Activated CD4-positive, alpha-beta T cell treated with anti-CD3 and anti-CD28 coated beads for 36 hours (primary cell): ENCODE measurements at regions of chr6 and their contacts with region 1.

Region 1: DNA sequence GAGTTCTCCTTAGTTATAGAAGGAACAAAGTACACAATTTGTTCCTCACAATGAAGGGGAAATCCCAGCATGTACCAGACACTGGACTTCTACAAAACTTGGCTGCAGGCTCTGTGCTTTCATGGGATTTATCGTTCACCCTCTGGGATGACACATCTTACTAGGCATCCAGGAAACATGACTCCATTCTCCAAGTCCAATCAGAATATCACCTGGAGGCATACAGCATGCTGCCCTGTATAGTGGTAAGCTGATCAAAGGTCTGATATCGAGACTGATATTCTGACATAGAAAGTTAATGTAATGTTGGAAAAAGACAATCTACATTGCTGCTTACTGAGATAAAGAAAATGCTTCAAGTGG is 6.7 kb downstream of the RWDD2A start:
- DNase-seq: no peak
- ATAC-seq: no peak
- H3K4me3 Mint-ChIP-seq: no peak overlapping the region
- H3K27ac Mint-ChIP-seq: no peak overlapping the region
- H3K4me1 Mint-ChIP-seq: peaks cover 5% of the 10 kb centered on the region
- H3K27me3 Mint-ChIP-seq: no peaks in the 10 kb centered on the region

Region 2: DNA sequence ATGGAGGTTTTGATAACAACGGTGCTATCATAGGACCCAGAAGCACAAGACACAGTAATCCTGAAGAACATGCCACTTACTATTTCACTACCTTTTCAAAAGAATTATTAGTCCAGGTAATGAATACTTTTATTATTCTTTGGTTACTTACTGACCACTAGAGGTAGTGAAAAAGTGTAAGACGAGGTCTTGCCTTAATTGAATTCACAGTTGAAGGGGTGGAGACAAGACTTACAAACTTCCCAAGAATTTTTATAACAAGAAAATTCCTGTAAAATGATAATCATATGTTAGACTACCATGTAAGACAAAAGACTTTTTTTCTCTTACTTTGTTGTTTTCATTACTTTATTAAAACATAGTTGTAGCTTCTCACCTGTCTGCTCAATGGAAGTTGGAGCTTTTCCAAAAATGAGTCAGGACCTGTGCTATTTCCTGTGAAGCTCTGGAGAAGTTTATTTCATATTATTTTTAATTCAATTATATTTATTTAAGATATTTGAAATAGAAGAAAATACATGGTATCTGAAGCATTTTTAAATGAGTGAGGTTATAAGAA is 80.0 kb before region 1 on chr6:
- CTCF ChIA-PET with region 1: no interaction called
- POLR2A ChIA-PET with region 1: no interaction called
- intact Hi-C with region 1: loop called in 1 of 2 experiments (anchors 2 kb)
- DNase-seq: no peak
- ATAC-seq: no peak
- H3K4me3 Mint-ChIP-seq: no peak overlapping the region
- H3K27ac Mint-ChIP-seq: no peak overlapping the region
- H3K4me1 Mint-ChIP-seq: no peaks in the 10 kb centered on the region
- H3K27me3 Mint-ChIP-seq: no peaks in the 10 kb centered on the region